ENCODE measurements at regions of chr11 and their contacts with region 1.

Region 1: GRCh38 chr11:6682936-6683861 is at the start of gene MRPL17:
- DNase-seq: peak; percentile 100
- H3K4me3 Mint-ChIP-seq: peak within 1 kb of the TSS; percentile 86
- H3K27ac Mint-ChIP-seq: peak within 1 kb of the TSS; percentile 97
- H3K4me1 Mint-ChIP-seq: peaks cover 26% of the 10 kb centered on the region
- H3K27me3 Mint-ChIP-seq: peaks cover 2% of the 10 kb centered on the region
- total RNA-seq, gene MRPL17: 135 and 146 TPM in 2 replicates

Region 2: GRCh38 chr11:6315811-6316425 is 367.3 kb before region 1 on chr11:
- intact Hi-C with region 1: loop called (anchors 5 kb)
- DNase-seq: peak; percentile 80
- H3K4me3 Mint-ChIP-seq: no peak overlapping the region
- H3K27ac Mint-ChIP-seq: no peak overlapping the region
- H3K4me1 Mint-ChIP-seq: peaks cover 25% of the 10 kb centered on the region
- H3K27me3 Mint-ChIP-seq: peaks cover 47% of the 10 kb centered on the region

Region 3: DNA sequence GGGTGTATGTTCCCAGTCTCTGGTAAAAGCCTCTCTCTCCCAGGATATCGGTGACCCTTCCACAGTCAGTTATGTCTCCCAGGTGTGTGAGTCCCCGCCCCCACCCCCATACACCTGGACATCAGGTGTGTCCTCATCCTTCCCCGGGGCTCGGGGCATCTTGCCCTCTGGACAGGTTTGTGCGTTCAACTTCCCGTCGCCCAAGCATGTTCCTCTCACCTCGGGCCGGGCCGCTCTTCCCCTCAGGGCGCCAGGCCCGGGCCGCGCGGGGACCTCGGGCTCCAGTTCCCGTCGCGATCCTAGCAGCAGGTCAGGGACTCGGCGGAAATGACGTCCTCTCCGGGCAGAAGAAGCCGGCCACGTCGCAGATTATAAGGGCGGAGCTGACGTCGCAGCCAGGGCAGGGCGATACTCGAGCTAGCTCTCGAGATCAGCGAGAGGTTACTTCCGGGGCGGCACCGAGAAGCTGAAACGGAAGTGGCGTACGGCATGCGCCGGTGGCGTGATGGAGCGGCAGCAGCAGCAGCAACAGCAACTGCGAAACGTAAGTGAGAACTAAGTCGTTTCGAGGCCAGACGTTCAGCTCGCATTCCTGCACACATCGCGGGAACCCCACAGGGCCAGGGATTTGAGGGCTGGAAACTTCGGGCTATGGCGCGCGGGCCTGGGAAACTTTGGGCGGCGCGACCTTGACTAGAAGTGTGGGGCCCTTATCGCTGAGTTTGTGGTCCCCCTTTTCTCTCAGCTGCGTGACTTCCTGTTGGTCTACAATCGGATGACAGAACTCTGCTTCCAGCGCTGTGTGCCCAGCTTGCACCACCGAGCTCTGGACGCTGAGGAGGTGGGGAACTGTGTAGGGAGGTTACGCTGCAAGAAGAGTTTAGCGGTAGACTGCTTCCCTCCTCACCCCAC is 201.9 kb before region 1 on chr11 and contains the starts of genes ARFIP2 and TIMM10B:
- intact Hi-C with region 1: loop called (anchors 1 kb)
- DNase-seq: peak; percentile 99
- H3K4me3 Mint-ChIP-seq: peak within 1 kb of the TSS; percentile 94
- H3K27ac Mint-ChIP-seq: peak within 1 kb of the TSS; percentile 98
- H3K4me1 Mint-ChIP-seq: peaks cover 30% of the 10 kb centered on the region
- H3K27me3 Mint-ChIP-seq: no peaks in the 10 kb centered on the region
- total RNA-seq, gene ARFIP2: 50.8 and 51.2 TPM in 2 replicates
- total RNA-seq, gene TIMM10B: 41.3 and 47.4 TPM in 2 replicates

Region 4: DNA sequence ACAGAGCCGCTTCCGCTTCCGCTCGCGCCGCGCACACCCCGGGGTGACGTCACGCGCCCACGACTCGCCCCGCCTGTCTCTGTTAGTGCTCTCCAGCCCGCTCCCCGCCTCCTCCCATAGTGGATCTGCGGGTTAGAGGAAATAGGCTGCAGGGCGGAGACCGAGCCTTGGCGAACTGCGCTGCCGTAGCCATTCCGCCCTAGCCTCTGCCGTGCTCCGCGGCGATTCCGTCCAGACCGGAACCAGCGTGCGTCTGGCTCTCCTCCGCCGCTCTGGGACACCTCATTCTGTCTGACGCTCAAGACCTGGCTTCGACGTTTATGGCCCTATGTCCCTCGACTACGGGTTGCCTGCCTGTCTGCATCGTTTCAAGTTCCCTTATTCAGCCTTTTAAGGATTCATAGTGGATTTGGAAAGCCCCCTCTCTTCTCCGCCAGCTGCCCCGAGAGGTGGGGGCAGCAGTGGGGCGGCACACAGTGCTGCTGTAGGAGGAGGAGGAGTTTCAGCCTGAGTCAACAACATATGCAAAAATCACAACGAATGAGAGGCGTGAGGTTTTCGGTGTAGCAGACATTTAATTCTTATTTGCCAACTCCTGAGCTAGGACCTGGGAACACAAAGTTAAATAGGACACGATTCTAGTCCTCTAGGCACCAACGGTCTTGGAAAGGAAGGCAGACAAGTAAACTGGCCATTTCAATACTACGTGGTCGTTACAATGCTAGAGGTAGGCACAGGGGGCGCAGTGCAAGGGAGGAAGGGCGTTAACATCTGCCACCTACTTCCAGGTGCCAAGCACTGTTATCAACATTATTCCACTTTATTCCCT is 70.8 kb before region 1 on chr11 and contains the start of gene TAF10:
- intact Hi-C with region 1: loop called (anchors 1 kb)
- DNase-seq: peak; percentile 99
- H3K4me3 Mint-ChIP-seq: peak within 1 kb of the TSS; percentile 95
- H3K27ac Mint-ChIP-seq: peak within 1 kb of the TSS; percentile 87
- H3K4me1 Mint-ChIP-seq: peaks cover 32% of the 10 kb centered on the region
- H3K27me3 Mint-ChIP-seq: no peaks in the 10 kb centered on the region
- total RNA-seq, gene TAF10: 140 and 141 TPM in 2 replicates

Region 5: GRCh38 chr11:6705905-6706535 is 22.8 kb after region 1 on chr11:
- intact Hi-C with region 1: loop called (anchors 1 kb)
- DNase-seq: peak; percentile 82
- H3K4me3 Mint-ChIP-seq: no peak overlapping the region
- H3K27ac Mint-ChIP-seq: no peak overlapping the region
- H3K4me1 Mint-ChIP-seq: peaks cover 4% of the 10 kb centered on the region
- H3K27me3 Mint-ChIP-seq: no peaks in the 10 kb centered on the region